Activated T-helper 1 cell treated with anti-CD3 and anti-CD28 coated beads, Interleukin-12 subunit alpha, Interleukin-12 subunit beta, Interleukin-2, Interleukin-4 antibody, amounts not matched to agents 30 ng/mL and 10 ng/mL and 1 ng/mL, durations not matched to agents 14 hours and 24 hours and 36 hours (primary cell): ENCODE measurements at regions of chr6 and their contacts with region 1.

Region 1: DNA sequence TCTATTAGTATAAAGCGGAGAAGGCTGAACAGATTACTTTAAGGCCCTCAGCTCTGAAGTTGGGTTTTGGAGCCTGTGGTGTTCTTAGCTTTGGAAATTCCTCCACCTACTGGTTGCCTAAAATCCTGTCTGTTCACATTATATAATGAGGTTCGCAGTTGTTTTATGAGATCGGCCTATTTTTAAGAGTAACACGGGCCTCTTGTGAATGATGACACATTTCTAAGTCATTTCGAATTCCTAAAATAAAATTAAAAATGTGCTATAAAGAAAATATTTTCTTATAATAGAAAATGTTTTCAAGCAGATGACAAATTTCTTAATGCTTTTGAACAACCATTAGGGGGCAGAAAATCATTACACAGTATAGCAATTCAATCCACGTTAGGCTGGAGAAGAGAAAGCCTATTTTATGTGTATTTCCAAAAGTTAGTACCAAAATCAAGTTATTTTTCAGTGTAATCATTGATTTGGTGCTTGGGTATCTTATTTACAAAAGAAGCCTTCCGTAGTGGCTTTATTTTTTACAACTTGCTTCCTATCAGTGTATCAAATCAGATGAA is 15.8 kb upstream of the FAM8A1 start:
- DNase-seq: no peak
- H3K4me3 Mint-ChIP-seq: no peak overlapping the region
- H3K27ac Mint-ChIP-seq: no peak overlapping the region
- H3K4me1 Mint-ChIP-seq: peaks cover 20% of the 10 kb centered on the region
- H3K27me3 Mint-ChIP-seq: peaks cover 9% of the 10 kb centered on the region

Region 2: DNA sequence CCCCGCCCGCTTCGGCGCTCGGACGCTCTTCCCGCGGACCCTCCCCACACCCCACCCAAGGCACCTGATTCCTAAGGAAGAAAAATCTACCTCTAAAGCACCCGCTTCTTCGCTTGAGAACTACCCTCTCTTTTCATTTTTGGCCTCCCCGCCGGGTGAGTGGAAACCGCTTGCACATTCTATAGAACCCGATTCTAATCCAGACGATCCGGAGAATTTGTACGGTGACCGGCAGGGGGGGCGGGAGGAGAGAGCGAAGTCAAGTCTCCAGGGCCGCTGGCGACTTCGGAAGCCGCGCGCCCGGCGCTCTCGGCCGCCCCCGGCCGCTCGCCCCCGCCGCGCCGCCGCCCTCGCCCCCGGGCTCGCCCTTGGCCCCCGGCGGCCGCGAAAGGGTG is 303.2 kb before region 1 on chr6 and contains the start of gene RBM24:
- intact Hi-C with region 1: loop called (anchors 2 kb)
- DNase-seq: no peak
- H3K4me3 Mint-ChIP-seq: peak within 1 kb of the TSS; percentile 53
- H3K27ac Mint-ChIP-seq: peak within 1 kb of the TSS; percentile 34
- H3K4me1 Mint-ChIP-seq: peaks cover 8% of the 10 kb centered on the region
- H3K27me3 Mint-ChIP-seq: peaks cover 70% of the 10 kb centered on the region
- total RNA-seq, gene RBM24: not detected in 2 replicates

Region 3: DNA sequence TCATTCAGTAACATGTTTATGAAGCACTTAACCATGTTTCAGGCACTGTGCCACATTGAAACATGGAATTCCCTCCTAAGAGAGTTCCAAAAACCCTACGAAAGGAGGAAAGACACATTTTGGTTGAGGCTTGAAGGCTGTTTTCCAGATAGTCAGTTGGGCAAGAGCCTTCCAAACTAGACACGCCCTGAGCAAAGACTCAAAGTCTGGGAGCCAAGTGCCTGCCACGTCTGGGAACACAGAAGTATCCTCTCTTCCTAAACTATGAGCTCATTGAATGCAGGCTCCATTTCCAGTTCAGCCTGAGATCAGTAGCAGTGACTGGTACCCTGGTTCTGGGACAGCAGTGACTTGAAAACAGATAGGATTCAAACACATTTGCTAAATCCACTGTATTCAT is 58.7 kb before region 1 on chr6:
- intact Hi-C with region 1: no loop called
- DNase-seq: no peak
- H3K4me3 Mint-ChIP-seq: no peak overlapping the region
- H3K27ac Mint-ChIP-seq: no peak overlapping the region
- H3K4me1 Mint-ChIP-seq: no peaks in the 10 kb centered on the region
- H3K27me3 Mint-ChIP-seq: peaks cover 2% of the 10 kb centered on the region

Region 4: GRCh38 chr6:17808609-17809008 is 224.3 kb after region 1 on chr6:
- intact Hi-C with region 1: loop called (anchors 1 kb)
- DNase-seq: no peak
- H3K4me3 Mint-ChIP-seq: no peak overlapping the region
- H3K27ac Mint-ChIP-seq: no peak overlapping the region
- H3K4me1 Mint-ChIP-seq: no peaks in the 10 kb centered on the region
- H3K27me3 Mint-ChIP-seq: peaks cover 10% of the 10 kb centered on the region

Region 5: GRCh38 chr6:17820055-17820454 is 235.7 kb after region 1 on chr6:
- intact Hi-C with region 1: loop called (anchors 1 kb)
- DNase-seq: no peak
- H3K4me3 Mint-ChIP-seq: no peak overlapping the region
- H3K27ac Mint-ChIP-seq: no peak overlapping the region
- H3K4me1 Mint-ChIP-seq: no peaks in the 10 kb centered on the region
- H3K27me3 Mint-ChIP-seq: peaks cover 5% of the 10 kb centered on the region